ENCODE measurements at regions of chr17 and their contacts with region 1.

Region 1: DNA sequence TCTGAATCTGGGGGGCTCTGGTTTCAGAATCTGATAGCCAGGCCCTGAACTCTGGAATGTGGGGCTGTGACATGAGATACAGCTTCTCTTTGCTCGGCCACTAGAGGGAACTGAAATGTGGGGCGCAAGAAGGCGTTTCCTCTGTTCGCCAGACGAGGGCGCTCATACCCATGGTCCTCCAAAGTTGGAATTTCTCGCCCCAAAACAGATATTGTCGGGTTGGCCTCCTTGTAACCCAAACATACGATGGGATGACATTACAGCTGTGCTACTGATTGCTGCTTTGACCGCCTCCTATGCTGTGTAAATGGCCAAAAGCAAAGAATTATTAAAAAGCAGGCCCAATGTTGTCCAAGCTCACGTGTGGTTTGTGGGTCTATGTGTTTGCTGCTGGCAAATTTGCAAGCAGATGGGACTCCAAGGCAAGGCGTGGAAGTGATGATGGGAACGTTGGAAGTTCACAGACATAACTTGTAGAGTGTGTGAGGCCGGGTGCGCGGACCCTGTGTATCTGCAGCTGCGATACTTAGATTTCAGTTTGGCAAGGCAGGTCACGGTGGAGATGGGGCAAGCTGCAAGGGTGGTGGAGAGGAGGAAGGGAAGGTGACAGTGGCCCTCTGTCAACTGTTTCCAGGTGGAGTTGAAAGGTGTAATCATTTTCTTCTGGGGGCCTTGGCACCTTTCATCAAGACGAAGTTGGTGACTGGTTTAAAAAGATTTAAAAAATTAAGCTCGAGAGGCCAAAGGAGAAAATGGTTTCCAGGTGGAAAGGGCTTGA is 13.0 kb upstream of the MSI2 start:
- DNase-seq: peak; percentile 66
- H3K4me3 Mint-ChIP-seq: no peak overlapping the region
- H3K27ac Mint-ChIP-seq: peak overlapping the region; percentile 30
- H3K4me1 Mint-ChIP-seq: peaks cover 12% of the 10 kb centered on the region
- H3K27me3 Mint-ChIP-seq: peaks cover 23% of the 10 kb centered on the region

Region 2: GRCh38 chr17:57084802-57085447 is 158.4 kb before region 1 on chr17 and contains the start of gene AKAP1:
- intact Hi-C with region 1: no loop called
- DNase-seq: peak; percentile 96
- H3K4me3 Mint-ChIP-seq: peak within 1 kb of the TSS; percentile 92
- H3K27ac Mint-ChIP-seq: peak within 1 kb of the TSS; percentile 87
- H3K4me1 Mint-ChIP-seq: peaks cover 28% of the 10 kb centered on the region
- H3K27me3 Mint-ChIP-seq: peaks cover 9% of the 10 kb centered on the region
- total RNA-seq, gene AKAP1: 53.8 and 59.9 TPM in 2 replicates

Region 3: GRCh38 chr17:57215311-57215710 is 28.0 kb before region 1 on chr17:
- intact Hi-C with region 1: no loop called
- DNase-seq: no peak
- H3K4me3 Mint-ChIP-seq: no peak overlapping the region
- H3K27ac Mint-ChIP-seq: no peak overlapping the region
- H3K4me1 Mint-ChIP-seq: no peaks in the 10 kb centered on the region
- H3K27me3 Mint-ChIP-seq: peaks cover 14% of the 10 kb centered on the region

Region 4: DNA sequence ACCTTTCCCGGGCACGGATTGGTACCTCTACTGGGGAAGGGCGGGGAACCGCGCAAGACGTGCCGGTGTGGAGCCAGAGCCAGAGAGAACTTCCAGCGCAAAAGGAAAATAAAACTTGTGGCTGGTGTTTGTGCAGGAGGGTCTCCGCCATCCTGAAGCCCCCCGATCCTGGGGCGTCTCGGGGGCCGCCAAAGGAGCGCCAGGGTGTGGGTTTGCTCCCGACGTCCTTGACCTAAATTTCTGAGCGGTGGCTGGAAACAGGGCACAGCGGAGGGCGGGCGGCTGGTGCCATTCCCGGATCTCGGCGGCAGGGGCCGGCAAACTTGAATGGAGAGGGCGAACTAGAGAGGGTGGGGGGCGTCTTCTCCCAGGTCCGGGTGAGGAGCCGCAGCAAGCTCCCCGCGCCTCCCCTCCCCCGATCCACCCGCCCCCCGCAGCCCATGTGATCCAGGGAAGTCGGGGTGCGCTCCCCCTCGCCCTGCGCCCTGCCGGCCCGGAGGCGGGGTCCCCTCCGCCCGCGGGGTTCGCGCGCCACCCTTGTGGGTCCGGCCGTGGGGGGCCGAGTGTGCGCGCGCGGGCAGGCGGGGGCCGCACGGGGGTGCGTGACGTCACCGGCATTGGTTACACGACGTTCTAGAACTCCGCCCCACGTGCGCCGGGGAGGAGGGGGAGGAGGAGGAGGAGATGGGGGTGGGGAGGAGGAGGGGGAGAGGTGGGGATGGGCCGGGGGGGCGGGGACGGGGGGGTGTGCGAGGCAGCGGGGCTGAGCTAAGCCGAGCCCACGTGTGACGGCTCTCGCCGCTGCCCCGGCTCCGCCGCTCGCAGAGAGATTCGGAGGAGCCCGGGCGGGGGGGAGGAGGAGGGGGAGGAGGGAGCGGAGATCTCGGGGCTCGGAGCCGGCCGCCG is 12.7 kb after region 1 on chr17 and contains the start of gene MSI2:
- intact Hi-C with region 1: loop called (anchors 1 kb)
- DNase-seq: peak; percentile 84
- H3K4me3 Mint-ChIP-seq: peak within 1 kb of the TSS; percentile 89
- H3K27ac Mint-ChIP-seq: peak within 1 kb of the TSS; percentile 93
- H3K4me1 Mint-ChIP-seq: peaks cover 47% of the 10 kb centered on the region
- H3K27me3 Mint-ChIP-seq: no peaks in the 10 kb centered on the region
- total RNA-seq, gene MSI2: 272 and 278 TPM in 2 replicates

Region 5: GRCh38 chr17:57401556-57402488 is 158.5 kb after region 1 on chr17:
- intact Hi-C with region 1: loop called (anchors 5 kb)
- DNase-seq: no peak
- H3K4me3 Mint-ChIP-seq: no peak overlapping the region
- H3K27ac Mint-ChIP-seq: peak overlapping the region; percentile 2
- H3K4me1 Mint-ChIP-seq: peaks cover 30% of the 10 kb centered on the region
- H3K27me3 Mint-ChIP-seq: no peaks in the 10 kb centered on the region

Region 6: GRCh38 chr17:57671667-57672632 is 428.6 kb after region 1 on chr17:
- intact Hi-C with region 1: loop called (anchors 1 kb)
- DNase-seq: peak; percentile 55
- H3K4me3 Mint-ChIP-seq: no peak overlapping the region
- H3K27ac Mint-ChIP-seq: no peak overlapping the region
- H3K4me1 Mint-ChIP-seq: peaks cover 27% of the 10 kb centered on the region
- H3K27me3 Mint-ChIP-seq: no peaks in the 10 kb centered on the region

Region 7: GRCh38 chr17:57783106-57783742 is 539.9 kb after region 1 on chr17:
- intact Hi-C with region 1: loop called (anchors 1 kb)
- DNase-seq: peak; percentile 73
- H3K4me3 Mint-ChIP-seq: no peak overlapping the region
- H3K27ac Mint-ChIP-seq: no peak overlapping the region
- H3K4me1 Mint-ChIP-seq: no peaks in the 10 kb centered on the region
- H3K27me3 Mint-ChIP-seq: peaks cover 21% of the 10 kb centered on the region

Measured in activated T-helper 1 cell treated with anti-CD3 and anti-CD28 coated beads, Interleukin-12 subunit alpha, Interleukin-12 subunit beta, Interleukin-2, Interleukin-4 antibody, amounts not matched to agents 30 ng/mL and 10 ng/mL and 1 ng/mL, durations not matched to agents 14 hours and 24 hours and 36 hours (primary cell).